Heart right ventricle (tissue), 16 donors: ENCODE measurements at regions of chr3 and their contacts with region 1.

Region 1: GRCh38 chr3:32296256-32297204 is 58.0 kb downstream of the CMTM8 start:
- DNase-seq: peak; percentile 46 to 56
- ATAC-seq: peak; percentile 70 to 91 (median 82)
- H3K4me3 ChIP-seq: no peak overlapping the region
- H3K27ac ChIP-seq: no peak overlapping the region
- H3K4me1 ChIP-seq: peaks cover 0 to 14% (median 4%) of the 10 kb centered on the region in 9 donors
- H3K27me3 ChIP-seq: no peaks in the 10 kb centered on the region
- CTCF ChIP-seq: peak; percentile 72 to 96 (median 90)

Region 2: GRCh38 chr3:32334675-32335074 is 38.1 kb after region 1 on chr3:
- intact Hi-C with region 1: loop called in 6 of 10 experiments (anchors 5 kb)
- DNase-seq: no peak
- ATAC-seq: peak in 1 of 8 donors; percentile 13
- H3K4me3 ChIP-seq: no peak overlapping the region
- H3K27ac ChIP-seq: no peak overlapping the region
- H3K4me1 ChIP-seq: peaks cover 0 to 24% (median 5%) of the 10 kb centered on the region in 9 donors
- H3K27me3 ChIP-seq: no peaks in the 10 kb centered on the region
- CTCF ChIP-seq: peak in 4 of 9 donors; percentile 12 to 37 (median 14)

Region 3: GRCh38 chr3:32340039-32340438 is 43.5 kb after region 1 on chr3:
- intact Hi-C with region 1: loop called in 9 of 10 experiments (anchors 2 to 5 kb)
- DNase-seq: peak in 1 of 2 donors; percentile 17
- ATAC-seq: peak; percentile 55 to 86 (median 81)
- H3K4me3 ChIP-seq: no peak overlapping the region
- H3K27ac ChIP-seq: no peak overlapping the region
- H3K4me1 ChIP-seq: peaks cover 0 to 24% (median 5%) of the 10 kb centered on the region in 9 donors
- H3K27me3 ChIP-seq: no peaks in the 10 kb centered on the region
- CTCF ChIP-seq: peak; percentile 14 to 69 (median 60)

Region 4: GRCh38 chr3:32391643-32392535 is 95.4 kb after region 1 on chr3 and contains the start of gene CMTM7:
- intact Hi-C with region 1: loop called in 3 of 10 experiments (anchors 5 to 10 kb)
- DNase-seq: peak; percentile 73 to 76
- ATAC-seq: peak; percentile 81 to 95 (median 90)
- H3K4me3 ChIP-seq: peak within 1 kb of the TSS; percentile 58 to 95 (median 76)
- H3K27ac ChIP-seq: peak within 1 kb of the TSS; percentile 31 to 96 (median 86)
- H3K4me1 ChIP-seq: peaks cover 0 to 40% (median 12%) of the 10 kb centered on the region in 9 donors
- H3K27me3 ChIP-seq: no peaks in the 10 kb centered on the region
- CTCF ChIP-seq: peak in 3 of 9 donors; percentile 10 to 23 (median 11)
- total RNA-seq, gene CMTM7: 1.7 to 9.2 (median 2.8) TPM

Region 5: DNA sequence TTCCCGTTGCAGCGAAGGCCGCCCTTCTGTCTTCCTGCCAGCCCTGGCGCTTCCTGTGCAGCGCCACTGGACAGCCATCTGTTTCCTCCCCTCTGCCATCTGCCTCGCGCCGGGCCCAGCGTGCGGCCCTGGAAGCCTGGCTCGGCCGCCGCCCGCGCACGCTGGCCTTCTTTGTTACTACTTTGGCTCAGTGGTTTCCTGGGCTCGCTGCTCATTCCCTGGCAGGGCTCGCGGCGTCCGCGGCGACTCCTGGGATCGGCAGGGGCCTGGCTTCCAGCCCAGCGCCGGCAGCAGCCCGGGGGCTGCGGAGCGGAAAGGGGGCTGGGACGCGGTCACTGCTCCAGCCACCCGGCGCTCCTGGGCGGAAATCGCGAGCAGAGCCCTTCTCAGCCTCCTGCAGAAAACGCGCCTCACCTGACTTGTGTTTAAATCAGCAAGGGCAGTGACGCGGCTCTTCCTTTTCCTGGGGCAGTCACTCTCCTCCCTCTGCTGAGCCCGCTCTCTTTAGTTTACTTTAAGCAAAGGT is 105.1 kb after region 1 on chr3:
- intact Hi-C with region 1: loop called in 4 of 10 experiments (anchors 5 to 10 kb)
- DNase-seq: peak; percentile 83 to 85
- ATAC-seq: peak; percentile 85 to 93 (median 90)
- H3K4me3 ChIP-seq: peak overlapping the region; percentile 7 to 61 (median 54)
- H3K27ac ChIP-seq: peak overlapping the region; percentile 62 to 95 (median 86)
- H3K4me1 ChIP-seq: peaks cover 4 to 88% (median 34%) of the 10 kb centered on the region in 9 donors
- H3K27me3 ChIP-seq: no peaks in the 10 kb centered on the region
- CTCF ChIP-seq: peak in 2 of 9 donors; percentile 8 to 12

Region 6: DNA sequence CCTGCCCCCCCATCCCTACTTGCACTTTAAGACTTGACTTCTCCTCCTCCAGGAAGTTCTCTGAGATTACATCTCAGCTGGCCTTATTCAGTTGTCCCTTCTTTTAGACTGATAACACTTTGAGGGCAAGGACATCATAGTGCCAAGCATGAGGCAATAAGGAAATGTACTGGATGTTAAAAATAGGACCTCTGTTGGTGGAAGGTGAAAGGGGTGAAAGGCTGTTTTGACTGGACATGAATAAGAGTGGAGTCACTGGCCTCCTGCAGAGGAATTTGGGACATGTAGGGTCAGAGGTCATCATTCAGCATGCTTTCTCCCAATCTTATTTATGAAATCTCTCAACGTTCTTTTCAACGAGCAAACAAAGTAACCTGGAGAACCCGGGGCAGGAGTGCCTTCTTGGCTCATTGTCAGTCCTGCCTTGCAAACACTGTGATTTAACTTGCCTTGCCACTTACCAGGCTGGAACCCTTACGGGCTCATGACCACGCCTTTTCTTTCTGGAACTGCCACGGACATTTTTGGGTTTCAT is 559.9 kb after region 1 on chr3:
- intact Hi-C with region 1: no loop called
- DNase-seq: no peak
- ATAC-seq: peak in 1 of 8 donors; percentile 80
- H3K4me3 ChIP-seq: no peak overlapping the region
- H3K27ac ChIP-seq: no peak overlapping the region
- H3K4me1 ChIP-seq: no peaks in the 10 kb centered on the region
- H3K27me3 ChIP-seq: no peaks in the 10 kb centered on the region
- CTCF ChIP-seq: no peak